AG04449 (cell line): ENCODE measurements at regions of chr7 and their contacts with region 1.

Region 1: GRCh38 chr7:108002726-108003598 is at the start of gene LAMB1:
- DNase-seq: no peak
- H3K4me3 ChIP-seq: peak within 1 kb of the TSS; percentile 82
- CTCF ChIP-seq: no peak

Region 2: DNA sequence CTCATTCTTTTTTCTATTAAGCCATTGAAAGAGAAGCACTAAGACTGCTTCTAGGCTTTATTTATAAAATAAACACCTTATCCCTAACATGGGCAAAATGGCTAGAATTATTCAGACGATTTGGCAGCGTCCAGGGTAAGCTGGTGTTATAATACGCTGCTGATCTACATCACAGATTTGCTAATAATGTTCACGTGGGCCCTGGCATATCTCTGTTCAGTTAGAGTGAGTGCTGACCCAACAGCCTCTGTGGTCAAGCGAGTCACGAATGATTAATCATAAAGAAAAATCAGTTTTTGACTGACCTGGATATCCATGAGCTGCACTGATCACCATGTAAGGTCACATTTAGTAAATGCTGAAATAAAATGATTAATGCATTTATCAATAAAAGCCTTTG is 287.4 kb before region 1 on chr7:
- CTCF ChIA-PET with region 1: no interaction called
- POLR2A ChIA-PET with region 1: no interaction called
- DNase-seq: no peak
- H3K4me3 ChIP-seq: no peak overlapping the region
- CTCF ChIP-seq: no peak

Region 3: DNA sequence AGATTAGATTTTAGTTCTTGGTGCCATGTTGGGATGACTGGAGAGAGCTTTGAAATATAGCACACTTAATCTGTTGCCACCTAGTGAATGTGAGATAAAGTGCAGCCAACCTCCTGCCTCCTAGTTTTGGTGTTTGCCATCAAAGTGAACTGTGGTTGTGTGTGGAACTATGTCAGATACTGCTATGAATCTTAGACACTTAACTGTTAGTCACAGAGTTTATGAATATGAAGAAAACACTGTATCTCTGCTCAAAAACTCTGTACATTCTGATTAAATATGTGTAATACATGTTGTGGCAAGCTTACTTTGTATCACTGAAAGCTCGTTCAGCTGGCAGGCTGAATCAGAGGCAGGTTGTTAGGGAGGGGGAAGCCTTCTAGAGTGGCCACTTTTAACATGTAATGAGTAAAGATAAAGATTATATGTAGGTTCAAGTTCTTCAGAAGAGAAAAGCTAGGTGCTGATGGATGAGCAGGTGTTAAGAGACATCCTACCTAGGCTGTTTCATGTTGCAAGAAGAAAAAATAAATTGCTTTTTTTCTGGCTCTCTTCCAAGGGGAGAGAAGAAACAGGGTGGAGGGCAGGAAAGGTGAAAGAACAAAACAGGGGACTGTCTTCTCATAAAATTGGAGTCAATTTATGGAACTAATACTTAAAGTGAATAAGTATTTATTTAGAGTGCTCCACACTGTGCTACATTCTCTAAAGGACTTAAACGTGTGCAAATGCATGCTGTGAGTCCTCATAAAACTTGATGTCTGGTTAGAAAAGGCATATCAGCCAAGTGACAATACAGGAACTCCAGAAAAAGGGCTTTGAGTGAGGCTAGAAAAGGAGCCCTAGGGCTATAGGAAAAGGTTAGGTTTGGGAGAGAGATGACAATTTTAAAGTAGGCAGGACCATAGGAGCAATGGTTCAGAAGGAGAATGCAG is 14.1 kb after region 1 on chr7:
- CTCF ChIA-PET with region 1: interaction called, 32 read pairs
- POLR2A ChIA-PET with region 1: interaction called, 12 read pairs
- DNase-seq: no peak
- H3K4me3 ChIP-seq: no peak overlapping the region
- CTCF ChIP-seq: peak; percentile 40